ENCODE measurements at regions of chr17 and their contacts with region 1.

Region 1: GRCh38 chr17:10278213-10278612 is 79.8 kb upstream of the GAS7 start:
- DNase-seq: no peak
- H3K4me3 Mint-ChIP-seq: peak overlapping the region; percentile 67
- H3K27ac Mint-ChIP-seq: no peak overlapping the region
- H3K4me1 Mint-ChIP-seq: peaks cover 12% of the 10 kb centered on the region
- H3K27me3 Mint-ChIP-seq: peaks cover 20% of the 10 kb centered on the region
- CTCF ChIP-seq: no peak

Region 2: GRCh38 chr17:10295728-10296343 is 17.6 kb after region 1 on chr17:
- CTCF ChIA-PET with region 1: interaction called, 12 read pairs
- POLR2A ChIA-PET with region 1: no interaction called
- intact Hi-C with region 1: no loop called
- DNase-seq: peak; percentile 61
- H3K4me3 Mint-ChIP-seq: no peak overlapping the region
- H3K27ac Mint-ChIP-seq: no peak overlapping the region
- H3K4me1 Mint-ChIP-seq: peaks cover 5% of the 10 kb centered on the region
- H3K27me3 Mint-ChIP-seq: no peaks in the 10 kb centered on the region
- CTCF ChIP-seq: peak; percentile 37